ENCODE measurements at regions of chr5 and their contacts with region 1.

Region 1: DNA sequence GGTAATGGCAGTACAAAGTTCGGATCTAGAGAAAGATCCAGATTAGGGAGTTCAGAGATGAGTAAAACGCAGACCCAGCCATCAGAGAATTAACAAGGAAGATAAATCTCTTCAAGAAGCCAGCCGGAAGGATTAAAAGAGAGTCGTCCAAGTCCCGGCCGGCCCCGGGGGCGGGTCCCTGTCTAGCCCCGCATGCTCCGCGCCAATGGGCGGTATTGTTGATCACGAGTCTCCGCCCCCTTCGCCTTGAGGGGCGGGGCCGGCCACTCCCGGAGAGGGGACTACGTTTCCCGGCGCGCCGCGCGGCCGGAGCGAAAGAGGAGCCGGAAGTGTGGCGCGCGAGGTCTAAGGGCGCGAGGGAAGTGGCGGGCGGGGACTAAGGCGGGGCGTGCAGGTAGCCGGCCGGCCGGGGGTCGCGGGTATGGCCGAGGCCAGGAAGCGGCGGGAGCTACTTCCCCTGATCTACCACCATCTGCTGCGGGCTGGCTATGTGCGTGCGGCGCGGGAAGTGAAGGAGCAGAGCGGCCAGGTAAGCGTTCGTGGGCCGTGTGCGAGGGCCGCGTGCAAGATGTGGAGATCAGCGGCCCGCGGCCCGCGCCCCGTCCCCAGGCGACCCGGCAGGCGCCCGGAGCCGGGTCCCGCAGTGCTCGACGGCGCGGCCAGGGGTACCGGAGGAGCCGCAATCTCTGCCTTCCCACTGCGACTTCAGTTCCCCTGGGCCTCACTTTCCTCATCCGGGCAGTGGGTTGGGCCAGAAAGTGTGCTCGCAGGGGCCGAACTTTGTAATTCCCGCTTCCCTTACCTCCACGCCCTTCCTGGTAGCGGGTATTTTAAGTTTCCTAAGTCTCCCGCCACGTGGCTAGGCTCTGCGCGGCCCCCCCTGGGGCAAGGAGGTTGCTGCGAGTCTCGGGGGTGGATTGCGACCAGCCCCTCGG is at the start of gene TCOF1:
- DNase-seq: peak; percentile 91
- ATAC-seq: peak; percentile 100
- H3K4me3 ChIP-seq: peak within 1 kb of the TSS; percentile 81
- H3K27ac ChIP-seq: peak within 1 kb of the TSS; percentile 66
- H3K4me1 ChIP-seq: peaks cover 6% of the 10 kb centered on the region
- H3K27me3 ChIP-seq: no peaks in the 10 kb centered on the region
- CTCF ChIP-seq: no peak
- POLR2A ChIP-seq: no peak
- RAD21 ChIP-seq: no peak; the same call in 1 of the 2 replicates
- total RNA-seq, gene TCOF1: 18.3 and 19.7 TPM in 2 replicates

Region 2: GRCh38 chr5:150000256-150000989 is 357.2 kb before region 1 on chr5 and contains the starts of genes HMGXB3 and TIGD6:
- CTCF ChIA-PET with region 1: no interaction called
- POLR2A ChIA-PET with region 1: no interaction called
- dilution Hi-C with region 1: no loop called
- in situ Hi-C with region 1: no loop called
- intact Hi-C with region 1: loop called (anchors 10 kb)
- DNase-seq: peak; percentile 95
- ATAC-seq: peak; percentile 88
- H3K4me3 ChIP-seq: peak within 1 kb of the TSS; percentile 62
- H3K27ac ChIP-seq: peak within 1 kb of the TSS; percentile 75
- H3K4me1 ChIP-seq: no peaks in the 10 kb centered on the region; the same call in 1 of the 2 replicates
- H3K27me3 ChIP-seq: no peaks in the 10 kb centered on the region
- CTCF ChIP-seq: no peak
- POLR2A ChIP-seq: peak; percentile 92
- RAD21 ChIP-seq: no peak; the same call in 1 of the 2 replicates
- total RNA-seq, gene HMGXB3: 27.6 and 29.2 TPM in 2 replicates
- total RNA-seq, gene TIGD6: 6.1 and 6.6 TPM in 2 replicates

Region 3: GRCh38 chr5:150202501-150202900 is 155.1 kb before region 1 on chr5:
- CTCF ChIA-PET with region 1: no interaction called
- POLR2A ChIA-PET with region 1: no interaction called
- dilution Hi-C with region 1: no loop called
- in situ Hi-C with region 1: no loop called
- intact Hi-C with region 1: no loop called
- DNase-seq: no peak
- ATAC-seq: no peak
- H3K4me3 ChIP-seq: no peak overlapping the region
- H3K27ac ChIP-seq: no peak overlapping the region
- H3K4me1 ChIP-seq: no peaks in the 10 kb centered on the region
- H3K27me3 ChIP-seq: peaks cover 26% of the 10 kb centered on the region
- CTCF ChIP-seq: no peak
- POLR2A ChIP-seq: no peak
- RAD21 ChIP-seq: no peak

Region 4: DNA sequence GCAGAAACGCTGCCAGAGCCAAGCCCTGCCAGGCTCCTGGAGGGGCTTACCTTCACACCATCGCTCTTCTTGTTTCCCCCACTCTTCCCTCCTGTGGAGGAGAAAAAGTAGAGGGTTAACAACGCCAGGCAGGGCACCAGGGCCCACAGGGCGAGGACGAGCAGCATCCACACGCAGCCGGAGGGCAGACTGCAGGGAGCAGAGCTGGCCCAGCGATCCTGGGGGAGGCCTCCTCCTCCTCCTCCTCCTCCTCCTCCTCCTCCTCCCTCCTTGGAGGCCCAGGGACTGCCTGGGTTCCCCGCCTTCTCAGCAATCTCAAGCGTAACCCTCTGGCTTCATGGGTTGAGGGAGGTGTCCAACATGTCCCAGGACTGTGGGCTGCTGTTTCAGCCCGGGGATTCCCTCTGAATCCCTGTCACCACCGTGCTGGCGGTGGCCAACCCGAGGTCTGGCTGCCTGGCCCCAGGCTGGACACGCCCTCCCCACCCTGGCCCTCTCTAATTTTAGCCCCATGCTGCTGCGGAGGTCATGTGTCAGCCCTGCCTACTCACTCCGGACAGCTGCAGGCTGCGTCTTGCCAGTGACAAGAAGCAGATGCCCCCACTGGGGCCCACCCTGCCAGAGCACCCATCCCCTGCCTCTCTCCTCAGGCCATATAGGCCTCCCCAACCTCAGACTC is 112.3 kb before region 1 on chr5:
- CTCF ChIA-PET with region 1: no interaction called
- POLR2A ChIA-PET with region 1: no interaction called
- dilution Hi-C with region 1: no loop called
- in situ Hi-C with region 1: no loop called
- intact Hi-C with region 1: no loop called
- DNase-seq: peak; percentile 28
- ATAC-seq: peak; percentile 83
- H3K4me3 ChIP-seq: no peak overlapping the region
- H3K27ac ChIP-seq: no peak overlapping the region
- H3K4me1 ChIP-seq: peaks cover 8% of the 10 kb centered on the region; the same call in 1 of the 2 replicates
- H3K27me3 ChIP-seq: peaks cover 9% of the 10 kb centered on the region
- CTCF ChIP-seq: no peak
- POLR2A ChIP-seq: no peak
- RAD21 ChIP-seq: no peak

Region 5: GRCh38 chr5:150263801-150264621 is 93.6 kb before region 1 on chr5:
- CTCF ChIA-PET with region 1: no interaction called
- POLR2A ChIA-PET with region 1: no interaction called
- dilution Hi-C with region 1: no loop called
- in situ Hi-C with region 1: loop called (anchors 5 kb)
- intact Hi-C with region 1: no loop called
- DNase-seq: peak; percentile 90
- ATAC-seq: peak; percentile 88
- H3K4me3 ChIP-seq: no peak overlapping the region
- H3K27ac ChIP-seq: peak overlapping the region; percentile 58
- H3K4me1 ChIP-seq: peaks cover 25% of the 10 kb centered on the region
- H3K27me3 ChIP-seq: no peaks in the 10 kb centered on the region
- CTCF ChIP-seq: no peak
- POLR2A ChIP-seq: no peak
- RAD21 ChIP-seq: no peak

Region 6: GRCh38 chr5:150377964-150378694 is 20.5 kb after region 1 on chr5:
- CTCF ChIA-PET with region 1: no interaction called
- POLR2A ChIA-PET with region 1: interaction called, 4 read pairs
- dilution Hi-C with region 1: no loop called
- in situ Hi-C with region 1: no loop called
- intact Hi-C with region 1: loop called (anchors 1 kb)
- DNase-seq: peak; percentile 99
- ATAC-seq: peak; percentile 85
- H3K4me3 ChIP-seq: no peak overlapping the region
- H3K27ac ChIP-seq: peak overlapping the region; percentile 87
- H3K4me1 ChIP-seq: peaks cover 20% of the 10 kb centered on the region
- H3K27me3 ChIP-seq: no peaks in the 10 kb centered on the region
- CTCF ChIP-seq: no peak
- POLR2A ChIP-seq: peak; percentile 12; the same call in 1 of the 2 replicates
- RAD21 ChIP-seq: no peak; the same call in 1 of the 2 replicates

Measured in IMR-90 (cell line).